BJ (cell line): ENCODE measurements at regions of chr20 and their contacts with region 1.

Region 1: GRCh38 chr20:50790651-50791277 is 4.1 kb upstream of the BCAS4 start:
- DNase-seq: peak; percentile 46
- H3K4me3 ChIP-seq: no peak overlapping the region
- H3K27me3 ChIP-seq: no peaks in the 10 kb centered on the region
- CTCF ChIP-seq: peak; percentile 97

Region 2: DNA sequence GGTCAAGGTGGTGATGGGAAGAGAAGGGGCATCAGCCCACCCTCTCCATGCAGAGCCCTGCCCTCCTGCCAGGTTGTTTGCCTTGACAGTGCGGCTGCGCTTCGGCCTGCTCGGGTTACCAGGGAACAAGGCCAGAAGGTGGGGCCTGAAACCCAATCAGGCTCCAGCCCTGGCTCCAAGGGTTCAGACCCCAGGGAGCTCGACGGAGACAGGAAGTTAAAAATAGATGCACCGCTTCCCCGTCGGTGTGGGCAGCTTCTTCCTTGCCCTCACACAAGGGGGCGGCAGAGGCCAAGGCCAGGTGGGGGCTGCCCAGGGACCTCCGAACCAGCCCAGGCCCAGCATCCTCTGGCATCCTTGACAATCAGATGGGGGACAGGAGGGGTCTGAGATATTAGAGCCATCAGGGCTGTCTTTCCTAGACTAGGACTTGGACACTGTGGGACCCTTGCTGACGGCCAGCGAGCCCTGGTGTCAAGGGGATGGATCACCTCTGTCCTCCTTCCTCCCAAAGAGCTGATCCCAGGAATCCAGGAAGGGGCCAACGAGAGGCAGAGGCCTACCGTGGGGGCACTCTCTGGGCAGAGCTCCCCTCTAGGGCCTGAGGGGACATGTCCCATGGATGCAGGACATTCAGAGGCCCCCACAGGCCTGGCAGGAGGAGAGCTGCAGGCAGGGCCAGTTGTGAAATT is 164.6 kb before region 1 on chr20:
- CTCF ChIA-PET with region 1: interaction called, 27 read pairs
- POLR2A ChIA-PET with region 1: interaction called, 4 read pairs
- DNase-seq: no peak
- H3K4me3 ChIP-seq: no peak overlapping the region
- H3K27me3 ChIP-seq: no peaks in the 10 kb centered on the region
- CTCF ChIP-seq: peak; percentile 82

Region 3: DNA sequence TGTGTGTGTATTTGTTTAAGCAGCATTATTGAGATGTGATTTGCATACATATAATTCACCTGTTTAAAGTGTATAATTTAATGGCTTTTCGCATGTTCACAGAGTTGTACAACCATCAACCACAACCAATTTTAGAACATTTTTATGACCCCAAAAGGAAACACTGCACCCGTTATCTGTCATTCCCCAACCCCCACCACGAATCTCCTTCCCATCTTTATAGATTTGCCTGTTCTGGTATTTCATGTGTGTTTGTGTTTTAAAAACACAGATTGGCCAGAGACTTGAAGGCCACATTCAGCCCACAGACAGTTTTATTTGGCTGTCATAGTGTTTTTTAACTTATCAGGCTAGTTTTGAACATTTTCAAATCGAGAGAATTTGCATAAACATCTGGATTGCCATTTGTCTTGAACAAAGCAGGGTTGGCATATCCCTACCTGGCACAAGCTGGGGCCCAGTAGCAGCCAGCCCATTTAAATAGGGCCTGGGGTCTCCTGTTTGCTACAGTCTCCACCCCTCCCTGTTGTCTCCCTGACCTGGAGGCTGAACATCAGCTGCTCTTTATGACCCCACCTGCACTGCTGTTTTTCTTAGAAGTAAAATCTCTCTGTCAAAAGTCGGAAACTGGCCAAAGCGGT is 14.4 kb after region 1 on chr20:
- CTCF ChIA-PET with region 1: interaction called, 15 read pairs
- POLR2A ChIA-PET with region 1: no interaction called
- DNase-seq: no peak
- H3K4me3 ChIP-seq: no peak overlapping the region
- H3K27me3 ChIP-seq: no peaks in the 10 kb centered on the region
- CTCF ChIP-seq: no peak

Region 4: DNA sequence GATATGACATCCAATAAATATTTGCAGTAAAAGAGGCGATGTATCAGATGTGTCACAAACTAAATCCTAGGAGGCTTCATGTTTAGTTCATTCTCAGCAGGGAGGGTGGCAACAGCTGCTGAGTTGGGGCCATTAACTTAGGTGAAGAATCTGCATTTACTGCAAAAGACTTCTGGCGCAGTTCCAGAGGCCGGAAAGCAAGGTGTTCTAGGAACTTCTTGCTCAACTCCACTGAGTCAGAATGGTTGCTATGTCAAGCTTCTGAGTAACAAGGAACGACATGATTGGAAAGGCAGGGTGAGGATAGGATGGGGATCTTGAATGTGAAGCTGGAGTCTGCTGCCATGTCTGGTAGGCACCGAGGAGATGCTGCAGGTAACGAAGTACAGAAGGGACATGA is 128.8 kb after region 1 on chr20:
- CTCF ChIA-PET with region 1: interaction called, 152 read pairs
- POLR2A ChIA-PET with region 1: no interaction called
- DNase-seq: no peak
- H3K4me3 ChIP-seq: no peak overlapping the region
- H3K27me3 ChIP-seq: no peaks in the 10 kb centered on the region
- CTCF ChIP-seq: no peak

Region 5: DNA sequence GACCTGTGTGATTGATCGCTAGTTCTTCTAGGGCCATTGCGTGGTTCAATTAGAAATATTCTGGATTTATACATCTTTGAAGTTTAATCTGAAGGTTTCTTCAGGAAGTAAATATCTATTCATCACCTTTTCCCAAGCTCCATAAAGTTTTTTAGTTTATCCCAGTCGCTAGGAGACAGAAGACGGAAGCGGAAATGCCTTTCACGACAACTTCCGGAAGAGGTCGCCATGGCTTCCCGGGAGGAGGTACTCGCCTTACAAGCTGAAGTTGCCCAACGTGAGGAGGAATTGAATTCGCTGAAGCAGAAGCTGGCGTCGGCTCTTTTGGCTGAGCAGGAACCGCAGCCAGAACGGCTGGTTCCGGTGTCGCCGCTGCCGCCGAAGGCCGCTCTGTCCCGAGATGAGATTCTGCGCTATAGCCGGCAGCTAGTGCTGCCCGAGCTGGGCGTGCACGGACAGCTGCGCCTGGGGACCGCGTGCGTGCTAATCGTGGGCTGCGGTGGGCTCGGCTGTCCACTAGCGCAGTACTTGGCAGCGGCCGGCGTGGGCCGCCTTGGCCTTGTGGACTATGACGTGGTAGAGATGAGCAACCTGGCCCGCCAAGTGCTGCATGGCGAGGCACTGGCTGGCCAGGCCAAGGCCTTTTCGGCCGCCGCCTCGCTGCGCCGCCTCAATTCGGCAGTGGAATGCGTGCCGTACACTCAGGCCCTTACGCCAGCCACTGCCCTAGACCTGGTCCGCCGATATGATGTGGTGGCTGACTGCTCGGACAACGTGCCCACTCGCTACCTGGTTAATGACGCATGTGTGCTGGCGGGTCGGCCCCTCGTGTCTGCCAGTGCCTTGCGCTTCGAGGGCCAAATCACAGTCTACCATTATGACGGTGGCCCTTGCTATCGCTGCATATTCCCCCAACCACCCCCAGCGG is 168.1 kb after region 1 on chr20 and contains the start of gene MOCS3:
- CTCF ChIA-PET with region 1: interaction called, 21 read pairs
- POLR2A ChIA-PET with region 1: interaction called, 11 read pairs
- DNase-seq: peak; percentile 48
- H3K4me3 ChIP-seq: peak within 1 kb of the TSS; percentile 92
- H3K27me3 ChIP-seq: no peaks in the 10 kb centered on the region
- CTCF ChIP-seq: no peak
- polyA plus RNA-seq, gene MOCS3: 3.4 and 3.8 TPM in 2 replicates

Region 6: DNA sequence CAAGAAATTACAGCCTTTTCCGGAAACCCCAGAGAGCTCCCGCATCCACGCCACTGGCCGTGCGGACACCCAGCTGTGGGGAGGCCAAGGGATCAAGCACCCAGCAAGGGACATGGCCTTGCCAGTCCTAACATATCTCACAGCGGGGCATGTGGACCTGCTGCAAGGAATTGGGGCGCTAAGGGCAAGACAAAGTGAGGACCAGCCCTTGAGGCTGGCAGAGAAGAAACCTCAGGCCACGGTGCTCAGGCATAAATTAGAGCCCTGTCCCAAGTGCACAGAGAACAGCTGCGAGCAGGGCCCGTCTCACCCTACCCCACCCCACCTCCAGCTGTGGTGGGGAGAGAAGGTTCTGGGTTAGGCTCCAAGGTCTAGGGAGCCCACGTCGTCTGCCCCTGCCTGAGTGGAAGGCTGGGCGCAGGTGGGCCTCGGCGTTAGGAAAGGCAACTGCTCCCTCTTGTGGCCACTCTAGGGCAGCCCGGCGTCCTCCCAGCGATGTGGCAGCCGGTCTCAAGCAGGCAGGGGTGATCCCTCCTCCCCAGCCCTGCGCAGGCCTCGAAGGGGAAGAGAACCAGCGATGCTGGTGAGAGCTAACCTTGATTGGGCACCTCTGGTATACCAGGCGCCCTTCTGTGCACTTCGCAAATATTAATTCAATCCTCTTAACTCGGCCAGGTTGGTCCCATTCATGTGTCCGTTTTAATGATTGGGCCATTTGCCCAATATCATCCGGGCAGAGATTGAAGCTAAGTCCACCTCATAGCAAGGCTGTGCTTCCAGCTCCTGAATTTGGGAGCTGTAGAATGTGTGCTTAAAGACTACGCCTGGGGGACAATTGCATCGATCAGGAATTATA is 516.0 kb after region 1 on chr20:
- CTCF ChIA-PET with region 1: interaction called, 19 read pairs
- POLR2A ChIA-PET with region 1: no interaction called
- DNase-seq: no peak
- H3K4me3 ChIP-seq: no peak overlapping the region
- H3K27me3 ChIP-seq: no peaks in the 10 kb centered on the region
- CTCF ChIP-seq: peak; percentile 92